SK-N-SH (cell line): ENCODE measurements at regions of chr1 and their contacts with region 1.

Region 1: DNA sequence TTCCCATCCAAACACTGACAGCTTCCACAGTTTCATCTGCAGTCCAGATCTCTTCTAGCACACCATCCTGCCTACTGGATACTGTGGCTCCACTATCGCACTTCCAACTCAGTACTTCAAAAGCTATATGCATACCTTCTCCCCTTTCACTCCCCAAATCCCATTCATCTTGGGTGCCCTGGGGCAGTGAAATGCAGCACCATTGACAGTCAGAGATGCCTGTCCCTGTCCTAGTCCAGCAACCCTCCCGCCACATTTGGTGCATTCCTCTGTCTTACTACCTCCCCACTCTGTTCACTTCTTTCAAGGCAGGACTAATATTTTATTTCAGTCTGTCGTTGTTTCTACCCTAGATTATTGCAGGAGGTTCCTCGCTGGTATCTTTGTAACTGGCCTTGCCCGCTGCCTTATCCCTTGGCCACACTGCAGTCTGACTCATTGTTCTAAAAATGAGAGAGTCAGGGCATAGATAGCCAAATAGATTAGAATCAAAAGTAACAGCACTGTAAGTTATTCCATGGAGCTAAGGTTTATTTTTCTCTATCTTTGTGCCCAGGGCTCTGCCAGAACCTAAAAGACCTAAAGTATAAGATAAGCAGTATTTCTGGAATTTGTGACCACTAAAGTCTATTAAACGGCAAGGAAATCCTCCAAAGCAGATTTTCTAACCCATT is 96.7 kb downstream of the ESRRG start:
- DNase-seq: no peak
- H3K4me3 ChIP-seq: no peak overlapping the region; a peak in 1 of 4 replicates
- H3K27ac ChIP-seq: peak overlapping the region; percentile 54 to 71; a peak in 2 of 4 replicates
- H3K4me1 ChIP-seq: peaks cover 5 to 13% of the 10 kb centered on the region in 2 experiments; a peak in 2 of 4 replicates
- H3K27me3 ChIP-seq: no peaks in the 10 kb centered on the region
- CTCF ChIP-seq: no peak
- EP300 ChIP-seq: 0 out of 4 replicates have a peak, but pooled peaks of 1 of the 2 experiments have one; percentile 47
- RAD21 ChIP-seq: no peak

Region 2: GRCh38 chr1:216600730-216601609 is 25.6 kb before region 1 on chr1:
- CTCF ChIA-PET with region 1: interaction called, 11 read pairs
- POLR2A ChIA-PET with region 1: no interaction called
- DNase-seq: peak; percentile 88
- H3K4me3 ChIP-seq: peak overlapping the region; percentile 64 to 70
- H3K27ac ChIP-seq: peak overlapping the region; percentile 82 to 99
- H3K4me1 ChIP-seq: peaks cover 0 to 44% of the 10 kb centered on the region in 2 experiments; a peak in 2 of 4 replicates
- H3K27me3 ChIP-seq: no peaks in the 10 kb centered on the region
- CTCF ChIP-seq: peak; percentile 63
- EP300 ChIP-seq: peak in 1 of 2 experiments; percentile 17; a peak in 2 of 4 replicates
- RAD21 ChIP-seq: peak; percentile 17; the same call in 1 of the 2 replicates

Region 3: DNA sequence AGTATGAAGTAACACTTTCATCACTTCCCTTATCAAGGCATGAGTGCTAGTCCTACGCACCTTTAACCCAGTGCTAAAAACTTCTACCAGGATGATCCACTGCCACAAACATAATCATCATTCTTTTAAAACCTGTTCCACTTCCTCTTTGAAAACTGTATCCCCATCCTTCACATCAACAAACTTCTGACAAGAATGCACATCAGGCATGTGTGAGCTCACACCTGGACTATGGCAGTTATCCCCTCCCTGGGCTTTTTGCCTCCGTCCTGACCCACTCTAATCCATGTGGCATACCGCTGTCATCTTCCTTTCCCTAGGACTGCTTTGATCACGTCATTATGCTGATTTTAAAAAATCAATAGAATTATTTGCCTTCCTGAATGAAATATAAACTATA is 26.5 kb after region 1 on chr1:
- CTCF ChIA-PET with region 1: no interaction called
- POLR2A ChIA-PET with region 1: no interaction called
- DNase-seq: no peak
- H3K4me3 ChIP-seq: no peak overlapping the region
- H3K27ac ChIP-seq: no peak overlapping the region
- H3K4me1 ChIP-seq: peaks cover 0 to 2% of the 10 kb centered on the region in 2 experiments; a peak in 2 of 4 replicates
- H3K27me3 ChIP-seq: no peaks in the 10 kb centered on the region
- CTCF ChIP-seq: no peak
- EP300 ChIP-seq: no peak
- RAD21 ChIP-seq: no peak

Region 4: DNA sequence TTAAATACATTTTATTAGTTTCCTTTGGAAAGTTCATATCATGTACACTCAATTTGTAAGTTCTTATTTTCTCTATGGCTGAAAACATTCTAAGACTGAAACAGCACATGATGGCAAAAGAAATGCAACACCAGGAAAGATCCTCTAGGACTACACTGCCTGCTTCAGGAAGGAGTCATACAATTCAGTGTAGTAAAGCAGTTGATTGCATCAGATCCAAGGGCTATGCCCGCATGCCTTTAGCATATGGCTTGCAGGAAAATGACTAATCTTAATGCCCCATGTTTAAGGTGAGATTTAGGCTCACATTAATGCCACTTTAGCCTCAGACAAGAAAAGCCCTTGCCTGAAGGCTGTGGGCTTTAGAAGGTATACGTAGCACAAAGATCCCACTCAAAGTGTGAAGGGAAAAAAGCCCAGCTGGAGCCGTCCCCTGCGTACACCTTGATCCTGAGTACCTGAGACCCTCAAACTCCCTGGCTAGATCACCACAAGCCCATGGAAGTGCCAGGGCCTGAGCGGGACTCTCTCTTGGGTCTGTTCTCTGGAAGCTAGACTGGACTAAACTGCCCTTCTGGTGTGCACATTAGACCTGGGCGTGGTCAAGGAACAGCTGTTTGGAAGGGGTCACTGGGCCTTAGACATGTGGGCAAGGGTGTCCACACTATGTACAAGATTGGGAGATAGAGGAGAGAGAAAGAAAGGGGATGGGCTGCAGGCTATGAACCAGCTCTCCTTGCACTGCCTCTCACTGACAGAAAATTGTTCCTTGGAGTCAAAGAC is 43.8 kb after region 1 on chr1:
- CTCF ChIA-PET with region 1: no interaction called
- POLR2A ChIA-PET with region 1: no interaction called
- DNase-seq: peak; percentile 6
- H3K4me3 ChIP-seq: no peak overlapping the region
- H3K27ac ChIP-seq: no peak overlapping the region
- H3K4me1 ChIP-seq: no peaks in the 10 kb centered on the region; a peak in 1 of 4 replicates
- H3K27me3 ChIP-seq: no peaks in the 10 kb centered on the region
- CTCF ChIP-seq: no peak
- EP300 ChIP-seq: no peak
- RAD21 ChIP-seq: peak; percentile 9; the same call in 1 of the 2 replicates